ENCODE measurements at regions of chr6 and their contacts with region 1.

Region 1: DNA sequence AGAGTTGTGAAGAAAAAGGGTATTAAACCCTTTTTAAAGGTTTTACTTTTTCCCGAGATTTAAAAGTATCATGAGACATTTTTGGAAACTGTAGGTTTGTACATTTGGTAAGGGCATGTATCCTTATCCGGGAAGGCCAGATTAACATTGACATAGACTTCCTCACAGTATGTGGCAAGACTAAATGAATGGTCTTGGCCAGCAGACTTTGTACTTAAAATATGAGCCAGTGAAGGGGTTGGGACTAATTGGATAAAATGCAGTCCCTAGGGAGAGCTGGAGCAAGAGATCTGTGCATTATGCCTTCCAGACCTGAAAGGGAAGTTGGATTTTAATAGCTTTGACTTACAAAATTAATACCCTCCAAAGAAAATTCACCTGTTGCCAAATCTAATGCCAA is 60.4 kb upstream of the CCN2 start:
- DNase-seq: no peak
- ATAC-seq: no peak
- H3K4me3 ChIP-seq: no peak overlapping the region
- H3K27ac ChIP-seq: no peak overlapping the region
- H3K4me1 ChIP-seq: peaks cover 42% of the 10 kb centered on the region
- H3K27me3 ChIP-seq: no peaks in the 10 kb centered on the region
- CTCF ChIP-seq: no peak
- EP300 ChIP-seq: no peak
- POLR2A ChIP-seq: no peak
- RAD21 ChIP-seq: no peak

Region 2: DNA sequence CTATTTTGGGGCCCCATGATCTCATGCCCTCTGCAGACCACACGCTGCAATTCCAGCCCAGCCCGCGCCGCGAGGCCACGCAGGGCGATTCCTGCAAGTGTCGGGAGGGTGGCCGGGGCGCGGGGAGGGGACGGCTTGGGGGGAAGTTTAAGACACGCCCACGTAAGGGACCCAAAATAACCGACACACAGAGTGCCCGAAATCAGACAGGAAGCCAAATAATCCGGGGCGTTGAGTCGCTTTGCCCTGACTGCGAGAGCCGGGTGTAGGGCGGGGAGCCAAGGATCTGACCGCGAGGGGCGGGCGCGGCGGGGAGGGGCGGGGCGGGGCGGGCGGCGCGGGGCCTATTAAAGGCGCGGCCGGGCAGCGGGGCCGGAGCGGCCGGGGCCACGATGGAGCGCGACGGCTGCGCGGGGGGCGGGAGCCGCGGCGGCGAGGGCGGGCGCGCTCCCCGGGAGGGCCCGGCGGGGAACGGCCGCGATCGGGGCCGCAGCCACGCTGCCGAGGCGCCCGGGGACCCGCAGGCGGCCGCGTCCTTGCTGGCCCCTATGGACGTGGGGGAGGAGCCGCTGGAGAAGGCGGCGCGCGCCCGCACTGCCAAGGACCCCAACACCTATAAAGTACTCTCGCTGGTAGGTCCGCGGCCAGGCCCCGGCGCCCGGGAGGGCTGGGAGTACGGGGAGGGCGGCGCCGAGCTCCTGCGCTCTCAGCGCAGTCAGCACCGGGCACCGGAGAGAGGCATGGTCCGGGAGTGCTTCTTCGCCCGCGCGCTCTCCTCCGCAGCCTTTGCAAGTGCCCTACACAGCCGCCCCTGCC is 203.7 kb before region 1 on chr6 and contains the start of gene ENPP1:
- CTCF ChIA-PET with region 1: no interaction called
- POLR2A ChIA-PET with region 1: no interaction called
- in situ Hi-C with region 1: no loop called
- intact Hi-C with region 1: no loop called
- DNase-seq: peak; percentile 71
- ATAC-seq: peak; percentile 93
- H3K4me3 ChIP-seq: peak within 1 kb of the TSS; percentile 71 to 94 (median 91)
- H3K27ac ChIP-seq: peak within 1 kb of the TSS; percentile 70
- H3K4me1 ChIP-seq: peaks cover 72% of the 10 kb centered on the region
- H3K27me3 ChIP-seq: no peaks in the 10 kb centered on the region; a peak in 1 of 5 replicates
- CTCF ChIP-seq: peak; percentile 83
- EP300 ChIP-seq: no peak
- POLR2A ChIP-seq: peak; percentile 43 to 84; a peak in 3 of 4 replicates
- RAD21 ChIP-seq: peak; percentile 71
- total RNA-seq, gene ENPP1: 45.8 and 56.5 TPM in 2 replicates

Region 3: DNA sequence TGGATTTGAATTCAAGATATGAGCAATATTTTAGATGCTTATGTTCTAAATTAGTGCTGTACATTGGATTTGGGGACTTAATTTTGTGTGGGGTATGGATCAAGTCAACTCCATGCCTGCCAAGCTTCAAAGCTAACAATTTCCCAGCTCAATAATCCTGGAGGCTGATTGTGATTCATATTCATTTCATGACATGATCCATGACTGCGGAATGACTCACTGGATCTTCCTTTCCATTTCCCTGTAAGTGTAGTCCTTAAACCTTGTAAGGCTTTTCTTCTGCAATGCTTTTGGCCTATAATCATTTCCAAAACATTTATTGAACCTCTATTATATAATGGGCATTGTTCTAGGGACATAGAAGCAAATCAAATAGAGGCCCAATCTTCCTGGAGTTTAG is 15.7 kb before region 1 on chr6:
- CTCF ChIA-PET with region 1: no interaction called
- POLR2A ChIA-PET with region 1: interaction called, 4 read pairs
- in situ Hi-C with region 1: no loop called
- intact Hi-C with region 1: loop called (anchors 1 kb)
- DNase-seq: no peak
- ATAC-seq: no peak
- H3K4me3 ChIP-seq: no peak overlapping the region
- H3K27ac ChIP-seq: no peak overlapping the region
- H3K4me1 ChIP-seq: peaks cover 25% of the 10 kb centered on the region
- H3K27me3 ChIP-seq: no peaks in the 10 kb centered on the region
- CTCF ChIP-seq: no peak
- EP300 ChIP-seq: no peak
- POLR2A ChIP-seq: no peak
- RAD21 ChIP-seq: no peak

Measured in HepG2 (cell line).